Activated CD4-positive, alpha-beta T cell treated with anti-CD3 and anti-CD28 coated beads for 36 hours (primary cell): ENCODE measurements at regions of chrX and their contacts with region 1.

Region 1: GRCh38 chrX:65045001-65045400 is 68.8 kb upstream of the ZC4H2 start:
- DNase-seq: no peak
- ATAC-seq: no peak
- H3K4me3 Mint-ChIP-seq: no peak overlapping the region
- H3K27ac Mint-ChIP-seq: no peak overlapping the region
- H3K4me1 Mint-ChIP-seq: no peaks in the 10 kb centered on the region
- H3K27me3 Mint-ChIP-seq: no peaks in the 10 kb centered on the region

Region 2: GRCh38 chrX:65017451-65017850 is 27.6 kb before region 1 on chrX:
- CTCF ChIA-PET with region 1: no interaction called
- POLR2A ChIA-PET with region 1: no interaction called
- intact Hi-C with region 1: no loop called
- DNase-seq: no peak
- ATAC-seq: no peak
- H3K4me3 Mint-ChIP-seq: no peak overlapping the region
- H3K27ac Mint-ChIP-seq: no peak overlapping the region
- H3K4me1 Mint-ChIP-seq: no peaks in the 10 kb centered on the region
- H3K27me3 Mint-ChIP-seq: no peaks in the 10 kb centered on the region

Region 3: DNA sequence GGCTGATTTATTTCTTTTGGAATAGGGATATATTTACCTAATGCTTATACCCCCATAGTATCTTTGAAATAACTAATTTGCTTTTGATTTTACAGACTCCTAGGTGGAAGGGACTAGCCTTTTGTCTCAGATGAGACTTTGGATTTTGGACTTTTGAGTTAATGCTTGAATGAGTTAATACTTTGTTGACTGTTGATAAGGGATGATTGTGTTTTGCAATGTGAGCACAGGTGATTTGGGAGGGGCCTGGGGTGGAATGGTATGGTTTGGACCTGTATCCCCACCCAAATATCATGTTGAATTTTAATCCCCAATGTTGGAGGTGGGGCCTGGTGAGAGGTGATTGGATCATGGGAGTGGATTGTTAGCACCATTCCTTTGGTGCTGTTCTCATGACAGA is 48.7 kb after region 1 on chrX:
- CTCF ChIA-PET with region 1: no interaction called
- POLR2A ChIA-PET with region 1: no interaction called
- intact Hi-C with region 1: loop called in 1 of 2 experiments (anchors 10 kb)
- DNase-seq: no peak
- ATAC-seq: no peak
- H3K4me3 Mint-ChIP-seq: no peak overlapping the region
- H3K27ac Mint-ChIP-seq: no peak overlapping the region
- H3K4me1 Mint-ChIP-seq: no peaks in the 10 kb centered on the region
- H3K27me3 Mint-ChIP-seq: no peaks in the 10 kb centered on the region